ENCODE measurements at regions of chr2 and their contacts with region 1.

Region 1: DNA sequence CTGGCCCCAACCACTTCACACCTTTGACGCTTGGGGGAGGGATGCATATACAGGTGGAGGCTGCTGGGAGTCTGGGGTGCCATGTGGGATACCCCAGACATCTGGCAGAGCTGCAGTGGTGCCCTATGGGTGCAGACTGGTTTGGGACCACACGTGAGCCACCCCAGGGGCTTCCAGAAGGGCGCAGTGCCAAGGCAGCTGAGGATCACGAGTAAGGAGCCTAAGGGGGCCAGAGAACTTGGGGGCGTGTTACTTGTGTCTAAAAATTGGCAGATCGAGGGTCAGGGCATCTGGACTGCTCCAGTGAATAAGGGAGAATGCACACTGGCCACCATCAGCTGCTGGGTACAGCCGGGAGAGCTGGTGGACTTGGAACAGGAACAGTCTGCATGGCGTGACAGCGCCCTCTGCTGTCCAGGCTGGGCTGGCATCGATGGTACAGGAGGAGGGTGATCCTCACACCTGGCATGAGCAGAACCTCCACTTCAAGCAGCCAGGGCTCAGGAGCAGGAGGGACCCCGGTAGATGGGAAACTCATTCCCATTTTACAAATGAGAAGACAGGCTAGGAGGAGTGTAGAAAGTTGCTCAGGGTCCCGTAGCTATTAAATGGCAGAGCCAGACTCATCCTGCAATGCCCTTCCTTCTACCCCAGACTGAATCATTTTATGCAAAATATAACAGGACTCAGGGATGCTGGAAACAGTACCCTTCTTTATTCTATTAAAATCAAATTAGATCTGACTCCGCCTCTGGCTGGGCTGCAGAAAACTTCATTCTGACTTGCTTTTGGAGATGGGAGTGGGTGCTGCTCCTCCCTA is 60.4 kb downstream of the ATOH8 start:
- DNase-seq: peak; percentile 30
- ATAC-seq: peak; percentile 99
- H3K4me3 ChIP-seq: no peak overlapping the region
- H3K27ac ChIP-seq: no peak overlapping the region
- H3K4me1 ChIP-seq: no peaks in the 10 kb centered on the region
- H3K27me3 ChIP-seq: no peaks in the 10 kb centered on the region
- CTCF ChIP-seq: peak; percentile 94 to 98 (median 95); a peak in 5 of 6 replicates
- EP300 ChIP-seq: no peak
- POLR2A ChIP-seq: no peak
- RAD21 ChIP-seq: peak; percentile 94

Region 2: GRCh38 chr2:85678794-85679672 is 135.2 kb before region 1 on chr2:
- CTCF ChIA-PET with region 1: interaction called, 17 read pairs
- POLR2A ChIA-PET with region 1: no interaction called
- RAD21 ChIA-PET with region 1: interaction called, 8 read pairs
- SMC1A ChIA-PET with region 1: interaction called, 4 read pairs
- in situ Hi-C with region 1: no loop called
- intact Hi-C with region 1: loop called (anchors 1 kb)
- DNase-seq: no peak
- ATAC-seq: peak; percentile 99
- H3K4me3 ChIP-seq: no peak overlapping the region
- H3K27ac ChIP-seq: no peak overlapping the region
- H3K4me1 ChIP-seq: no peaks in the 10 kb centered on the region
- H3K27me3 ChIP-seq: no peaks in the 10 kb centered on the region
- CTCF ChIP-seq: peak; percentile 96 to 99 (median 99)
- EP300 ChIP-seq: no peak
- POLR2A ChIP-seq: no peak
- RAD21 ChIP-seq: peak; percentile 89

Region 3: GRCh38 chr2:85723707-85724360 is 90.4 kb before region 1 on chr2:
- CTCF ChIA-PET with region 1: interaction called, 234 read pairs
- POLR2A ChIA-PET with region 1: interaction called, 5 read pairs
- RAD21 ChIA-PET with region 1: interaction called, 116 read pairs
- SMC1A ChIA-PET with region 1: interaction called, 106 read pairs
- in situ Hi-C with region 1: loop called (anchors 10 kb)
- intact Hi-C with region 1: loop called (anchors 1 kb)
- DNase-seq: no peak
- ATAC-seq: no peak
- H3K4me3 ChIP-seq: no peak overlapping the region
- H3K27ac ChIP-seq: no peak overlapping the region
- H3K4me1 ChIP-seq: no peaks in the 10 kb centered on the region
- H3K27me3 ChIP-seq: peaks cover 0 to 2% of the 10 kb centered on the region in 2 experiments; a peak in 1 of 4 replicates
- CTCF ChIP-seq: no peak
- EP300 ChIP-seq: no peak
- POLR2A ChIP-seq: no peak
- RAD21 ChIP-seq: no peak

Region 4: GRCh38 chr2:85741833-85742455 is 72.2 kb before region 1 on chr2:
- CTCF ChIA-PET with region 1: interaction called, 82 read pairs
- POLR2A ChIA-PET with region 1: interaction called, 3 read pairs
- RAD21 ChIA-PET with region 1: interaction called, 6 read pairs
- SMC1A ChIA-PET with region 1: interaction called, 5 read pairs
- in situ Hi-C with region 1: no loop called
- intact Hi-C with region 1: no loop called
- DNase-seq: no peak
- ATAC-seq: no peak
- H3K4me3 ChIP-seq: no peak overlapping the region
- H3K27ac ChIP-seq: no peak overlapping the region
- H3K4me1 ChIP-seq: peaks cover 3% of the 10 kb centered on the region; the same call in 1 of the 2 replicates
- H3K27me3 ChIP-seq: peaks cover 0 to 19% of the 10 kb centered on the region in 2 experiments; a peak in 3 of 4 replicates
- CTCF ChIP-seq: no peak
- EP300 ChIP-seq: no peak
- POLR2A ChIP-seq: no peak
- RAD21 ChIP-seq: no peak

Region 5: DNA sequence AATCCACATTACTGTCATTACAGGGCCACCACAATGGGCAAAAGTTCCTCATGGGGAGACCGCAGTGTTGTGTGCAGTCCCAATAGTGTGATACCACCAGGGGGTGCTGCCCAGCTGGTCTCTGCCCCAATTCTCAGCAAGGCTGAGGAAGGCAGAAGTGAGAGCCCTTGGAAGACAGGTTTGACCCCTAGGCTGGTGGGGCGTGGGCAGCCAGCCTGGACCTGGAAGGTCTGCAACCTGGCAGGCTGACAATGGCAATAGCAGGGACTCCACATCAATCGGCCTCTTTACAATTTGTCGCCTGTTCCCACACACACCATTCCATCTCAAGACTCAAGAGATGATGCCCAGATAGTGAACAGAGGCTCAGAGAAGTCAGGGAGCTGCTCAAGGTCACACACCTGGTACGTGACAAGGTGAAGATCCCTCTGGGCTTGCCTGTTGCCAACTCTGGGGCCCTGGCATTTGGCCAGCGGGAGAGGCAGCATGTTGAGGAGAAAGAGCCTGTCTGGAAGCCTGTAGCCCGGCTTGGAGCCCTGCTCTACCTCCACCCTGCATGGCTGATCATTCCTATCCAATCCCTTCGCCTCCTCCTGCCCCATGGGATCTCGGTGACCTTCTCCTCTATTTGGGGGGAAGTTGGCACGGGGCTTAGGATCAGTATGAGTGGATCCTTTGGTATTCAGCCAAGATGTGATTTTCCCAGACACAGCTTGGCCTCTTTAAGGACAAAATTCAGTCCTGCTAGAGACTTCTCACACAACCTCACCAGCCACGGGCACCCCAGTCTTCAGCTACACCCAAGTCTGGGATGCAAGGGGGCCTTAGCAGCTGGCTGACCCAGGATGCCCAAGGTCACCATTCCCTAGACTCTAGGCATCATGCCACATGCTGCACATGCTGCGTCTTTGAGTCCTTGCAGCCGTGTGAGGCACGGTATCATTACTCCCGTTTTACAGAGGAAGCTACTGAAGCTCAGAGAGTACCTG is 63.3 kb before region 1 on chr2:
- CTCF ChIA-PET with region 1: interaction called, 82 read pairs
- POLR2A ChIA-PET with region 1: no interaction called
- RAD21 ChIA-PET with region 1: interaction called, 31 read pairs
- SMC1A ChIA-PET with region 1: interaction called, 9 read pairs
- in situ Hi-C with region 1: no loop called
- intact Hi-C with region 1: loop called (anchors 1 kb)
- DNase-seq: no peak
- ATAC-seq: peak; percentile 54
- H3K4me3 ChIP-seq: no peak overlapping the region
- H3K27ac ChIP-seq: no peak overlapping the region
- H3K4me1 ChIP-seq: peaks cover 13% of the 10 kb centered on the region
- H3K27me3 ChIP-seq: peaks cover 10 to 33% of the 10 kb centered on the region in 2 experiments
- CTCF ChIP-seq: peak; percentile 50 to 62 (median 58)
- EP300 ChIP-seq: no peak
- POLR2A ChIP-seq: no peak
- RAD21 ChIP-seq: peak; percentile 46